ENCODE measurements at regions of chr15 and their contacts with region 1.

Region 1: GRCh38 chr15:39756806-39757522 is 25.7 kb downstream of the FSIP1 start:
- DNase-seq: peak; percentile 18
- H3K4me3 ChIP-seq: no peak overlapping the region
- H3K27ac ChIP-seq: no peak overlapping the region
- H3K4me1 ChIP-seq: no peaks in the 10 kb centered on the region
- H3K27me3 ChIP-seq: no peaks in the 10 kb centered on the region
- CTCF ChIP-seq: peak; percentile 64 to 65

Region 2: GRCh38 chr15:38707802-38708671 is 1048.9 kb before region 1 on chr15:
- CTCF ChIA-PET with region 1: no interaction called
- dilution Hi-C with region 1: no loop called
- in situ Hi-C with region 1: no loop called
- intact Hi-C with region 1: loop called (anchors 5 kb)
- DNase-seq: peak; percentile 52
- H3K4me3 ChIP-seq: no peak overlapping the region
- H3K27ac ChIP-seq: no peak overlapping the region
- H3K4me1 ChIP-seq: no peaks in the 10 kb centered on the region
- H3K27me3 ChIP-seq: no peaks in the 10 kb centered on the region
- CTCF ChIP-seq: peak; percentile 74 to 78

Region 3: GRCh38 chr15:39602143-39602542 is 154.8 kb before region 1 on chr15:
- CTCF ChIA-PET with region 1: no interaction called
- dilution Hi-C with region 1: loop called (anchors 25 kb)
- in situ Hi-C with region 1: no loop called
- intact Hi-C with region 1: loop called (anchors 5 kb)
- DNase-seq: no peak
- H3K4me3 ChIP-seq: no peak overlapping the region
- H3K27ac ChIP-seq: no peak overlapping the region
- H3K4me1 ChIP-seq: no peaks in the 10 kb centered on the region
- H3K27me3 ChIP-seq: no peaks in the 10 kb centered on the region
- CTCF ChIP-seq: peak in 1 of 2 donors; percentile 19

Region 4: DNA sequence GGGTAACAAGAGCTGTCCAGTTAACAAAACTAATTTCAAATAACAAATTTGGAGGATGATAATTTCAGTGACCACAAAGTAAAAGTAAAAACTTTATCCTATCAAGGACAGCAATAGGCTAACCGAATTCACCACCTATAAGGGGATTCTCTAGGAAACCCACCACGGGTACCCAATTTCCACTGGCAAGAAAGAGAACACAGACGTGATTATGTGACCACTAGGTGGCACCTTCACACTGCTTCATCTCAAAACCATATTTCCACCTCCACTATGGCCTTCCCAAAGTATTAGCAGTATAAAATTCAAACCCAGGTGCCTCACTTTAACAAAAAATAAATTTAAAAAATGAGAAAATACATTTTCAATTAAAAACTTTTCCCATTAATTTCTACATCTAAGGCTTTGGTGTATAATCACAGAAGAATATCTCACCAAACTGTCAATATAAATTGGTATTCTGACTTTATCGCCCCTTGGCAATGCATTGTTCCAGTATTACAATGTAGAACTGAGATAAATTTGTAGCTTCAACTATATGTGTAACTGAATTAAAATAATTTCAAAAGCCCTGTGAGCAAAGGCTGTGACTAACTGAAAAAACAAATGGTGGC is 70.9 kb before region 1 on chr15:
- CTCF ChIA-PET with region 1: interaction called, 13 read pairs
- dilution Hi-C with region 1: no loop called
- in situ Hi-C with region 1: no loop called
- intact Hi-C with region 1: loop called (anchors 1 kb)
- DNase-seq: peak; percentile 36
- H3K4me3 ChIP-seq: no peak overlapping the region
- H3K27ac ChIP-seq: no peak overlapping the region
- H3K4me1 ChIP-seq: no peaks in the 10 kb centered on the region
- H3K27me3 ChIP-seq: no peaks in the 10 kb centered on the region
- CTCF ChIP-seq: peak; percentile 70 to 71

Region 5: DNA sequence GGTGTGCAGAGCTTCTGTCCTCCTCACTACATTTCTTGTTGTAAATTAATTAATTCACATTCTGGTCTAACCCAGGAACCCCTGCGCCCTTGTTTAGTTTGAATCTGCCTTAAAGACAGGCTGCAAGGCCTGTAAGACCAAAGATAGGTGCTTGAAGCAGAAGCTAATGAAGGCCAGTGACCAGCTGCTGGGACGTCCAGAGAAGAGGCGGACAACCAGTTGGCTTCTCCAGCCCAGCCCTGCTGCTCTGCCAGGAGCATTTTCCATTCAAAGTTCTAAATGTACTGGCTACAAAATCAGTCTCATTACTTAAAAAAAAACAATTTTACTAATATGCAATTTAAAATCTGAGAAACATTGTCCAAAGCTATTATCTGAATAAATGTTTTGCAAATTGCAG is 18.0 kb before region 1 on chr15:
- CTCF ChIA-PET with region 1: interaction called, 10 read pairs
- dilution Hi-C with region 1: no loop called
- in situ Hi-C with region 1: no loop called
- intact Hi-C with region 1: no loop called
- DNase-seq: no peak
- H3K4me3 ChIP-seq: no peak overlapping the region
- H3K27ac ChIP-seq: no peak overlapping the region
- H3K4me1 ChIP-seq: no peaks in the 10 kb centered on the region
- H3K27me3 ChIP-seq: no peaks in the 10 kb centered on the region
- CTCF ChIP-seq: no peak